ENCODE measurements at regions of chr13 and their contacts with region 1.

Region 1: GRCh38 chr13:108269601-108270328 is at the start of gene TNFSF13B:
- DNase-seq: peak; percentile 66
- ATAC-seq: peak; percentile 70
- H3K4me3 Mint-ChIP-seq: peak within 1 kb of the TSS; percentile 77
- H3K27ac Mint-ChIP-seq: peak within 1 kb of the TSS; percentile 85
- H3K4me1 Mint-ChIP-seq: peaks cover 31% of the 10 kb centered on the region
- H3K27me3 Mint-ChIP-seq: no peaks in the 10 kb centered on the region
- total RNA-seq, gene TNFSF13B: 11.5 to 11.8 TPM

Region 2: GRCh38 chr13:108218044-108218974 is 51.5 kb before region 1 on chr13 and contains the start of gene ABHD13:
- POLR2A ChIA-PET with region 1: interaction called, 10 read pairs
- DNase-seq: peak; percentile 96
- ATAC-seq: peak; percentile 87
- H3K4me3 Mint-ChIP-seq: peak within 1 kb of the TSS; percentile 96
- H3K27ac Mint-ChIP-seq: peak within 1 kb of the TSS; percentile 95
- H3K4me1 Mint-ChIP-seq: peaks cover 32% of the 10 kb centered on the region
- H3K27me3 Mint-ChIP-seq: no peaks in the 10 kb centered on the region
- total RNA-seq, gene ABHD13: 10.1 to 11.5 TPM

Region 3: DNA sequence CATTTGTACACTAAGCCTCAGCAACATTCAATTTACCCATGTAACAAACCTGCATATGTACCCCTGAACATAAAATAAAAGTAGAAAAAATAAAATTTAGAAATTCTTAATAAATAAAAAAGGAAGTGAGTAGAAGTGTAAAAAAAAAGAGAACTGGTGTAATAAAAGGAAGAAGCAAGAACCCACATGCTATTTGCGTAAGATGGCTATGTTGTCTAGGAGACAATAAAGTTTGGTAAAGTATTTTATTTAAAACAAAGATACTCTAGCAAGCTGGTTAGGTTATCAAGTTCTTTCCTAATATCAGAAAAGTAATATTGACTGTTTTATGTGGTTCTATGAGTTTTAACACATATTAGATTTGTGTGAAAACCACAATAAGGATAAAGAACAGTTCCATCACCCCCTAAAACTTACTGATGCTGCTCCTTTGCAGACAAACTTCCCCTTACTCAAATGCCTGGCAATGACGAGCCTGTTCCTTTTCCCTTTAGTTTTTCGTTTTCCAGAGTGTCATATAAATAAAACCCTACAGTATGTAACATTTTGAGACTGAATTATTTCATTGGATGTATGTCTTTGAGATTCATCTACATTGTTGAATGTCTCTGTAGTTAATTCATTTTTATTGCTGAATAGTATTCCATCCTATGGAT is 98.6 kb after region 1 on chr13:
- POLR2A ChIA-PET with region 1: no interaction called
- DNase-seq: no peak
- ATAC-seq: no peak
- H3K4me3 Mint-ChIP-seq: no peak overlapping the region
- H3K27ac Mint-ChIP-seq: no peak overlapping the region
- H3K4me1 Mint-ChIP-seq: no peaks in the 10 kb centered on the region
- H3K27me3 Mint-ChIP-seq: peaks cover 4% of the 10 kb centered on the region

Measured in activated naive CD8-positive, alpha-beta T cell treated with anti-CD3 and anti-CD28 coated beads, Interleukin-2, amount 10 ng/mL, durations not matched to agents 7 days and 5 days (primary cell).